Adrenal gland (tissue), 19 donors: ENCODE measurements at regions of chr15 and their contacts with region 1.

Region 1: DNA sequence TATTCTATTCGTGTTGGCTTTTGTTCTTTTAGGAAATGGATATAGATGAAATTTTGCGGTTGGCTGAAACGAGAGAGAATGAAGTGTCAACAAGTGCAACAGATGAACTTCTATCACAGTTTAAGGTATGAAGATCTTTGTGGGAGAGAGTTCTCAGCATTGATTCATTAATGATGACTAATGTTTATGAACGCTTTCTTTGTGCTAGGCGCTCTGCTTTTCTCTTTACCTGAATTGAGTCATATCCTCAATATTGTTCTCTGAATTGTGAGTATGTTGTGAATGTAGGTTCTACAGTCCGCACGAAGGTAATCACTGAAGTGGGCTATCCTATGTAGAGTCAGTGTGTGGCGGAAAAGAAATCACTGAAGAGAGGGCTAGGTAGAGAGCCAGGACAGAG is 81.2 kb downstream of the CHD2 start:
- DNase-seq: no peak
- H3K4me3 ChIP-seq: no peak overlapping the region
- H3K27ac ChIP-seq: no peak overlapping the region
- H3K4me1 ChIP-seq: no peaks in the 10 kb centered on the region
- H3K27me3 ChIP-seq: no peaks in the 10 kb centered on the region
- CTCF ChIP-seq: no peak
- POLR2A ChIP-seq: no peak

Region 2: GRCh38 chr15:92938387-92938786 is 42.9 kb before region 1 on chr15:
- intact Hi-C with region 1: loop called in 1 of 2 experiments (anchors 5 kb)
- DNase-seq: no peak
- H3K4me3 ChIP-seq: no peak overlapping the region
- H3K27ac ChIP-seq: no peak overlapping the region
- H3K4me1 ChIP-seq: peaks cover 0 to 4% of the 10 kb centered on the region in 2 donors
- H3K27me3 ChIP-seq: no peaks in the 10 kb centered on the region
- CTCF ChIP-seq: peak in 2 of 6 experiments; percentile 25 to 26
- POLR2A ChIP-seq: no peak